ENCODE measurements at regions of chr1 and their contacts with region 1.

Region 1: GRCh38 chr1:166910396-166910994 is 34.4 kb upstream of the TADA1 start:
- DNase-seq: peak; percentile 37
- ATAC-seq: peak; percentile 99
- H3K4me3 Mint-ChIP-seq: no peak overlapping the region
- H3K27ac Mint-ChIP-seq: no peak overlapping the region
- H3K4me1 Mint-ChIP-seq: peaks cover 6% of the 10 kb centered on the region
- H3K27me3 Mint-ChIP-seq: no peaks in the 10 kb centered on the region
- CTCF ChIP-seq: peak; percentile 61

Region 2: DNA sequence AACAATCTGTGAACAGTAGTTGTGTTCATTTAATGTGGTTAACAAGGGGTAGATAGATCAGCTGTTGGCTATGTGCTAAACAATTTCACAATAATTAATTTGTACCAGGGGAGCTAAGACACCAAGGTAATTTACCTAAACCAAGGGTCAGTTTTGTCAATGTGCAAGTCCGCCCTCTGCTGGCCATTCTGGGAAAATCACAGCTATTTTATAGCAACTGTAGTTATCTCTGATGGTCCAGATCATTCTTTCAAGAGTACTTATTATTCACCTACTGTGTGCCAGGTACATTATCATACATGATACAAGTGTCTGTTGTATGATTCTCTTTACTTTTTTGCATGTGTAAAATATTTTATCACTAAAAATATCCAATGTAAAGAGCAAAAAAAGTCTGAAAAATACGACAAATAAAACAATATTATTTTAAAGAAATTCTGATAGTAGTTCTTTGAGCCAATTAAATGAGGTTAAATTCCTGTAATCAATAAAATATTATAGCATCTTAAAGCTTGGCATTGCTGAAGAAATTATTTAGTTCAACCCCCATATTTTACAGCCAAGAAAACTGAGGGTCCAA is 431.4 kb before region 1 on chr1:
- CTCF ChIA-PET with region 1: no interaction called
- POLR2A ChIA-PET with region 1: no interaction called
- intact Hi-C with region 1: no loop called
- DNase-seq: peak; percentile 18
- ATAC-seq: no peak
- H3K4me3 Mint-ChIP-seq: no peak overlapping the region
- H3K27ac Mint-ChIP-seq: no peak overlapping the region
- H3K4me1 Mint-ChIP-seq: peaks cover 4% of the 10 kb centered on the region
- H3K27me3 Mint-ChIP-seq: no peaks in the 10 kb centered on the region
- CTCF ChIP-seq: peak; percentile 50

Region 3: GRCh38 chr1:166813508-166814223 is 96.8 kb before region 1 on chr1:
- CTCF ChIA-PET with region 1: no interaction called
- POLR2A ChIA-PET with region 1: no interaction called
- intact Hi-C with region 1: no loop called
- DNase-seq: no peak
- ATAC-seq: no peak
- H3K4me3 Mint-ChIP-seq: no peak overlapping the region
- H3K27ac Mint-ChIP-seq: no peak overlapping the region
- H3K4me1 Mint-ChIP-seq: no peaks in the 10 kb centered on the region
- H3K27me3 Mint-ChIP-seq: peaks cover 26% of the 10 kb centered on the region
- CTCF ChIP-seq: no peak

Region 4: GRCh38 chr1:166920561-166921475 is 10.3 kb after region 1 on chr1:
- CTCF ChIA-PET with region 1: interaction called, 30 read pairs
- POLR2A ChIA-PET with region 1: interaction called, 4 read pairs
- intact Hi-C with region 1: loop called (anchors 2 kb)
- DNase-seq: peak; percentile 37
- ATAC-seq: peak; percentile 23
- H3K4me3 Mint-ChIP-seq: peak overlapping the region; percentile 82
- H3K27ac Mint-ChIP-seq: no peak overlapping the region
- H3K4me1 Mint-ChIP-seq: peaks cover 34% of the 10 kb centered on the region
- H3K27me3 Mint-ChIP-seq: peaks cover 26% of the 10 kb centered on the region
- CTCF ChIP-seq: no peak

Region 5: GRCh38 chr1:167059045-167059808 is 148.7 kb after region 1 on chr1:
- CTCF ChIA-PET with region 1: interaction called, 700 read pairs
- POLR2A ChIA-PET with region 1: interaction called, 34 read pairs
- intact Hi-C with region 1: loop called (anchors 1 kb)
- DNase-seq: peak; percentile 63
- ATAC-seq: peak; percentile 74
- H3K4me3 Mint-ChIP-seq: peak overlapping the region; percentile 36
- H3K27ac Mint-ChIP-seq: peak overlapping the region; percentile 54
- H3K4me1 Mint-ChIP-seq: peaks cover 4% of the 10 kb centered on the region
- H3K27me3 Mint-ChIP-seq: peaks cover 3% of the 10 kb centered on the region
- CTCF ChIP-seq: peak; percentile 98

Region 6: DNA sequence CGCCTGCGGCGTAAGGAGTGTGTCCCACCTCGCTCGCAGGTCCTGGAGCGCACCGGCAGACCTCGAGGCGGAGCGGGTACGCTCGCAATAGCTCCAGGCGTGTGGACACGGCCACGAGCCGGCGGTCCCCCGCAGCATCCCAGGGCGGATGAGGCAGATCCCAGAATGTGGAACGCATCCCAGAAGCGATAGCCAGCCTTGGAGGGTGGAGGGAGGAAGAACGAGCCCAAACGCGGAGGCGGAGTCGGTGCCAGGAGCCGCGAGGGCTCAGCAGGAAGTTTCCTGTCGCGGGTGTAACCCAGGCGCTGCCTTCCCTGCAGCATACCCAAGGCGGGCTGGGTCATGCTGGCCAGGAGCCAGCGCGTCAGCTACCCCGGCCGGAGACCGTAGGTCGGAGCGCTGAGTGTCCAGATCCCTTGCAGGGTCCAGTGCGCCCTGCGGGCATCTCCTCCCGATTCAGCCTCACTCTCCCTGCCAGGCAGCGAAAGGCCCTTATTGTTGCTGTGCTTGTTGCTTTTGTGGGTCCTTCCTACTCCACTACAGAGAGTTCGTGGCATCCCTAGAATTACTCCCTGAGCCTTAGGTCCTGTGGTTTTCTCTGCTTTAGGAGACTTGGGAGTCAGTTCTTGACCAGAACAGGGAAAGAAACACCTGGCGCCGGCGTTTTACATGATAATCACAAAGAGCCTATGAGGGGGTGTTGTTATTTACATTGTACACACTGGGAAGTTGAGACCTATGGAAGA is 211.1 kb after region 1 on chr1:
- CTCF ChIA-PET with region 1: interaction called, 3 read pairs
- POLR2A ChIA-PET with region 1: no interaction called
- intact Hi-C with region 1: loop called (anchors 5 kb)
- DNase-seq: no peak
- ATAC-seq: no peak
- H3K4me3 Mint-ChIP-seq: peak overlapping the region; percentile 80
- H3K27ac Mint-ChIP-seq: no peak overlapping the region
- H3K4me1 Mint-ChIP-seq: peaks cover 5% of the 10 kb centered on the region
- H3K27me3 Mint-ChIP-seq: peaks cover 33% of the 10 kb centered on the region
- CTCF ChIP-seq: no peak

Region 7: GRCh38 chr1:167447521-167448136 is 537.1 kb after region 1 on chr1:
- CTCF ChIA-PET with region 1: interaction called, 3 read pairs
- POLR2A ChIA-PET with region 1: no interaction called
- intact Hi-C with region 1: loop called (anchors 5 kb)
- DNase-seq: no peak
- ATAC-seq: peak; percentile 94
- H3K4me3 Mint-ChIP-seq: peak overlapping the region; percentile 61
- H3K27ac Mint-ChIP-seq: peak overlapping the region; percentile 70
- H3K4me1 Mint-ChIP-seq: peaks cover 25% of the 10 kb centered on the region
- H3K27me3 Mint-ChIP-seq: no peaks in the 10 kb centered on the region
- CTCF ChIP-seq: no peak

Region 8: DNA sequence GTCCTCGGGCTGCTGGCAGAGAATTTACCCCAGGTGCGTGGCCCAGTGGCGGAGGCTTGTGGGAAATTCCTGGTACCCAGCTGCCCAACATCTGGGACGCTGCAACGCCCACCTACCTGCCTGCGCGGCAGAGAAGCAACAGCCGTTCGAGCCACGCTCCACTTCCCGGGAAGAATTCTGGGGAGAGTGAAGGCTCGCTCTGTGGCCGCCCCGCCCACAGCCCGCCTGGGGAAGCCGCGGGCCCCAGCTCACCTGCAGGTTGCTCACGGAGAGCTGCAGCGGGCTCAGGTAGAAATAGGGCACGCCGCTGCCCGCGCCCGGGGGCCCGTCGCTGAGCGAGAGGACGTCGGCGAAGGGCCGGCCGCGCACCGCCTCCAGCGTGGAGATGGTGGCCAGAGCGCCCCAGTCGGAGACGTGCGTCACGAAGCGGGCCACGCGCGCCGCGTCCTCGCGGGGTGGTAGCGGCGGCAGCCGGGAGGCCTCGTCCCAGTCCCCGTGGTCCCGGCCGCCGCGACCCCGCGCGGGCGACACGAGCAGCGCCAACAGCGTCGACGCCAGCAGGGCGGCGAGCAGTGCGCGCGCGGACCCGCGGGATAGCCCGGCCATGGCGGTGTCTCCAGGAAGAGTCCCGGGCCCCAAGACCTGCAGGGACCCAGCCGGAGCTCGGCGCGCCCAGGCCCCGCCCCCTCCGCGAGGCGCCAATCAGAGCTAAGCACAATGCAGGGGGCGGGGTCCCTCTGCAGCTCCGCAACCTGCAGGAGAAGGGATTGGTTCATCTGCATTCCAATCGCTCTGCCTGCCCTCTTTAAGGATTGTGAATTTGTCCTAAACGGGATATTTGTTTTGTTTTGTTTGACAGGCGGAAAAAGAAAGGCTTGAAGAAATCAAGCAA is 642.9 kb after region 1 on chr1 and contains the start of gene CREG1:
- CTCF ChIA-PET with region 1: interaction called, 4 read pairs
- POLR2A ChIA-PET with region 1: no interaction called
- intact Hi-C with region 1: loop called (anchors 5 kb)
- DNase-seq: peak; percentile 84
- ATAC-seq: peak; percentile 99
- H3K4me3 Mint-ChIP-seq: peak within 1 kb of the TSS; percentile 86
- H3K27ac Mint-ChIP-seq: peak within 1 kb of the TSS; percentile 41
- H3K4me1 Mint-ChIP-seq: peaks cover 19% of the 10 kb centered on the region
- H3K27me3 Mint-ChIP-seq: no peaks in the 10 kb centered on the region
- CTCF ChIP-seq: no peak
- total RNA-seq, gene CREG1: 3.1 and 3.8 TPM in 2 replicates

Measured in activated B cell treated with CpG ODN at 0.5 μM for 24 hours (primary cell).